ENCODE measurements at regions of chr3 and their contacts with region 1.

Region 1: DNA sequence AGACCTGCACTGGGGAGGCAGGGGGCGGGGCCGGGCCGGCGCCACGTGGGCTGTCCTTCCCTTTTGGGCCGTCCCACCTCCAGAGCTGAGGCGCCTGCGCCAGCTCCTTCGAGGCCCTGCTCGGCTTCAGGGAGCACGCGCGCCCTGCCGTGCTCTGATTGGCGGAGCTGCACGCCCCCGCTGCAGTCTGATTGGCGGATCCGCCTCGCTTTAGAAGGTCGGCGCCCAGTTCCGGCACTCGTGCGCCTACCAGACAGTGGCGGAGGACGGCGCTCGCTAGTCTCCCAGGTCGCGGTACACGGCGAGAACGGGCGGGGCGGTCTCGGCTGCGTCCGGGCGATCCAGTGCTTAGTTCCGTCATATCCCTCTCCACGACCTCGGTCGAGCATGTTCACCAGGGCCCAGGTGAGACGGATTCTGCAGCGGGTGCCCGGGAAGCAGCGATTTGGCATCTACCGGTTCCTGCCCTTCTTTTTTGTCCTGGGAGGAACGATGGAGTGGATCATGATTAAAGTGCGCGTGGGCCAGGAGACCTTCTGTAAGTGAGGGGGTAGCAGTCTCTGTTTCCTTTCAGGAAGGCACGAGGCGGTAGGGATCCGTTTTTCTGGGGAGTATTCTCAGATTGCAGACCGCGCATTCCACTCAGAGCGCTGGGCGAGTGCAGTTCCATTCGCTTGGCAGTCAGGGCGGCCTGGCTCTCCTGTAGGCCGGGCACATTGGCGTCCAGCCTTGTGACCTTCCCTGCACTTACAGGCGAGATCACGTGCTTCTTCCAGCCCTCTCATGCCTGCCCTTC is at the start of gene UQCC5:
- DNase-seq: peak; percentile 92
- ATAC-seq: peak; percentile 87
- H3K4me3 Mint-ChIP-seq: peak within 1 kb of the TSS; percentile 98
- H3K27ac Mint-ChIP-seq: peak within 1 kb of the TSS; percentile 96
- H3K4me1 Mint-ChIP-seq: peaks cover 42% of the 10 kb centered on the region
- H3K27me3 Mint-ChIP-seq: no peaks in the 10 kb centered on the region
- CTCF ChIP-seq: no peak
- total RNA-seq, gene UQCC5: 11.7 and 13.6 TPM in 2 replicates

Region 2: DNA sequence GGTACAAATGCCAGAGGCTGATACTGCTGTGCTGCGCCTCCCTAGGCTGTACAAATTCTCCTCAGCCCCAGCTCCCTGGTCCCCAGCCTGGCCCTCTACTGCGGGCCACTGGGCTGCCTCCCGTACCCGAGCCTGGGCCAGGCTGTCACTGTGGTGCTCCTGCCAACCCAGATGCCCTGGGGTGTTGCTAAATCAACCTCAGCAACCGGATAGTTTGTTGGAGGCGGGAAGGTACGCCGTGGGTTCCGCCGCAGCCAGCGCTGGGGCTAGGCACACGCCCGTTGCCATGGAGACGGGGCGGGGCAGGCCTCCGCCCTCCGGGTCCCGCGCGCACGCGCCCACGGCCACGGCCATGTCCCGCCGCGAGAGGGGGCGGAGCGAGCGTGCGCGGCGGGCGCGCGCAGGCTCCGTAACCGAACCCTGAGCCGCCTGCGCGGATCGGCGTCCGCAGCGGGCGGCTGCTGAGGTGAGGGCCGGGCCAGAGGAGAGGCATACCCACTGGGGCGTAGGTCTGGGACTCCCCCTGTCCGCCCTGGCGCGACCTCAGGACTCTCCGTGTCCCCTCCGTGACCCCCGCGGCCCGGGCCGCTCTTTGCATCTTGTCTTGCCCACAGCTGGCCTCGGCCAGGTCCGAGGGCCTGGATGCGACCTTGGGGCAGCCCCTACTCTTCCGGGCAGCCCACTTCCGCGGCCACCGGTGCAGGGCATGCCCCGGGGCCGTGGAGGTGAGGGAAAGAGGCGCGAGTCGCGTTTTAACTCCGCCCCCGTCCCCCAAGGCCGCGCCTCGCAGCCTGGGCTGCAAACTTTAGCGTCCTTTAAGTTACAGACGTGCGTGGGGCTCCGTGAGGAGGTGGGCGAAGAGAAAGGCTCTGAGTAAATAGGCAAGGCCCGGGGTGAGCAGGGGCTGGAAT is 865.5 kb before region 1 on chr3 and contains the start of gene TEX264:
- CTCF ChIA-PET with region 1: no interaction called
- POLR2A ChIA-PET with region 1: no interaction called
- intact Hi-C with region 1: loop called (anchors 5 kb)
- DNase-seq: peak; percentile 95
- ATAC-seq: peak; percentile 85
- H3K4me3 Mint-ChIP-seq: peak within 1 kb of the TSS; percentile 89
- H3K27ac Mint-ChIP-seq: peak within 1 kb of the TSS; percentile 89
- H3K4me1 Mint-ChIP-seq: peaks cover 55% of the 10 kb centered on the region
- H3K27me3 Mint-ChIP-seq: no peaks in the 10 kb centered on the region
- CTCF ChIP-seq: no peak
- total RNA-seq, gene TEX264: 24.1 and 24.4 TPM in 2 replicates

Region 3: DNA sequence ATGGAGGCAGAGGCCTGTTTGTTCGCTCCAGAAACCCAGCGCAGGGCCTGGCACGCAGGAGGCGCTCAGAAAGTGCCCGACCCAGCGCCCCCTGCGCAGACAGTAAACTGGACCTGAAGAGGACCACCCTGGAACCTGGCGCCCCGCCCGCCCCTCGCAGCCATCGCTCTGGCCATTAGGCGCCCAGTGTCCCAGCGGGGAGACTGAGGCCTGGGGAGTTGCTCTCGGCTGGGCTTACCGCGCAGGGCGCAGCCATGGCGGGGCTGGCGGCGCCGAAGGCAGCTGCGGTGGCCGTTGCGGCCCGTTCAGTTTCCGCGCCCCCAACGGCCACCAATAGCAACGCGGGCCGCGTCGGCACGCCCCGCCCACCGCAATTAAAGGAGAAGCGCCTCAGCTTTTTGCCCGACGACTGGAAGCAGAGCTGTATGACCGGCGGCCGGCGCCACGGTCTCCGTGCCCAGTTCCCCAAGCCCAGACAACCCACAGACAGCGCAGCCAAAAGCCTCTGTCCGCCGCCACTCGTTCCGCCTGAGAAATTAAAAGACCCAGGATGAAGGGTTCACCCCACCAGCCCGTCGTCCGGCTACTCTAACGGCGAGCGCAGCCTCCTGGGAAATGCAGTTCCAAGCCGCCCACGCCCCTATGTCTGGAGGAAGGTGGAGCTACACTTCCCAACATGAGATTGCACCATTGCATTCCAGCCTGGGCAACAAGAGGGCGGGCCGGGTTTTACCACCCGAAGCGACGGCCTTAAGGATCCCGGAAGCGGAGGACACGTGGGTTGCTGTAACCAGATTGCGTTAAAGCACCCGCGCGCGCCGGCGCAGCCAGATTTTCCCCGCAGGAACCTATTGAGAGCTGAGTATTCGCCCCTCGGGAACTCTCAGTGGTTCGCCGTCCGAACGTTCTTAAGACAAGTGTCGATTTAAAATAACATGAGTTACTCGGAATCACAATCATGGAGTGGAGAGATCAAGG is 382.2 kb before region 1 on chr3 and contains the start of gene POC1A:
- CTCF ChIA-PET with region 1: no interaction called
- POLR2A ChIA-PET with region 1: no interaction called
- intact Hi-C with region 1: loop called (anchors 10 kb)
- DNase-seq: peak; percentile 84
- ATAC-seq: peak; percentile 87
- H3K4me3 Mint-ChIP-seq: peak within 1 kb of the TSS; percentile 96
- H3K27ac Mint-ChIP-seq: peak within 1 kb of the TSS; percentile 97
- H3K4me1 Mint-ChIP-seq: peaks cover 13% of the 10 kb centered on the region
- H3K27me3 Mint-ChIP-seq: no peaks in the 10 kb centered on the region
- CTCF ChIP-seq: no peak
- total RNA-seq, gene POC1A: 2.3 and 2.4 TPM in 2 replicates

Region 4: DNA sequence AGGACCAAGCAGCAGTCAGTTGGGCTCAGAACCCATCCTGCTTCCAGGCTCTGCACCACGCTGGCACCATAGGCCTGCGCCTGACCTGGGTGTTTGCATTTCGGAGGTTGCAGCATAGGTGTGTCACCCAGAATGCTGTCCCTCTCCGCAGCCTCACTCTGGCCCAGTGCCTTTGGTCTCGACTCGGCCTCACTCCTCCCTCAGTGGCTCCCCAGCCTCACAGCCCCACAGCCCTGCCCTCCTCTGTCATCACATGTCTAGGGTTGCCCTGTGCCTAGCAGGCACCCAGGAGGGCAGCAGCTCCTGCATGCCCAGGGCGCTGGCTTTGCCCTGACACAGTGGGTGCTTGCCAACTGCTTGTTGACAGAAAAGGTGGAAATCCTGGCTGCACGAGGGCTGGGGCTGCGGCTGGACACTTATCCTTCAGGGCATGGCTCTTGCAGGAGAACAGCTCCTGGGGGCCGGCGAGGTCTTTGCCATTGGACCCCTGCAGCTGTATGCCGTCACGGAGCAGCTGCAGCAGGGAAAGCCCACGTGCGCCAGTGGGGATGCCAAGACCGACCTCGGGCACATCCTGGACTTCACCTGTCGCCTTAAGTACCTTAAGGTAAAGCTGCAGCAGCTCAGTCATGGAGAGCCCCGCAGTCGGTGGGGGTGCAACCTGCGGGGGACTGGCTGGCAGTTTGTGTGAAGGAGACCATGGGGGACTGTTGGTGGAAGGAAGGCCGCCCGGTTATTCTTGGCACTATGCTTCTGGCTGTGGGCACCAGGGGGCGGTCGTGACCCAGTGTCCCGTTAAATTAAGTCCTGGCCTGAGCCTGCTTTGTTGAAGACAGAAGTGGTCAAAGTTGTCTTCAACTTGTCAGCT is 65.0 kb before region 1 on chr3:
- CTCF ChIA-PET with region 1: no interaction called
- POLR2A ChIA-PET with region 1: no interaction called
- intact Hi-C with region 1: loop called (anchors 2 kb)
- DNase-seq: peak; percentile 35
- ATAC-seq: peak; percentile 57
- H3K4me3 Mint-ChIP-seq: no peak overlapping the region
- H3K27ac Mint-ChIP-seq: no peak overlapping the region
- H3K4me1 Mint-ChIP-seq: no peaks in the 10 kb centered on the region
- H3K27me3 Mint-ChIP-seq: no peaks in the 10 kb centered on the region
- CTCF ChIP-seq: no peak

Region 5: DNA sequence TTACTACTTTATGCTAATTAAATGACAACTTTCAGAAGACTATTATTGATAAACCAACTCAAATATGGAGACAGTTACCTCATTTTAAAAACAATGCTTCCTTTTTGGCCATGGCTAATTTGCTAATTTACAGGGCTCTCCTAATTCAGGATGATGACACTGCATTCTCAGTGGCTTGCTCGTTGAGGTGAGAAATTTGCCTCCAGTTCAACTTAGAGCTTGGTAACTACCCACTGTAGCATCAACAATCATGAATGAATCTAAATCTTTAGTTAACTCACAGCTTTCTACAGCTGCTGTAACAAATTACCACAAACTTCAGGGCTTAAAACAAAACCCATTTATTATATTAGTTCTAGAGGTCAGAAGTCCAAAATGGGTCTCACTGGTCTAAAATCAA is 135.1 kb after region 1 on chr3:
- CTCF ChIA-PET with region 1: no interaction called
- POLR2A ChIA-PET with region 1: no interaction called
- intact Hi-C with region 1: no loop called
- DNase-seq: no peak
- ATAC-seq: no peak
- H3K4me3 Mint-ChIP-seq: no peak overlapping the region
- H3K27ac Mint-ChIP-seq: no peak overlapping the region
- H3K4me1 Mint-ChIP-seq: peaks cover 17% of the 10 kb centered on the region
- H3K27me3 Mint-ChIP-seq: no peaks in the 10 kb centered on the region
- CTCF ChIP-seq: no peak

Region 6: GRCh38 chr3:52685709-52686691 is 149.4 kb after region 1 on chr3 and contains the starts of genes GNL3 and PBRM1:
- CTCF ChIA-PET with region 1: no interaction called
- POLR2A ChIA-PET with region 1: interaction called, 5 read pairs
- intact Hi-C with region 1: loop called (anchors 1 kb)
- DNase-seq: peak; percentile 92
- ATAC-seq: peak; percentile 89
- H3K4me3 Mint-ChIP-seq: peak within 1 kb of the TSS; percentile 96
- H3K27ac Mint-ChIP-seq: peak within 1 kb of the TSS; percentile 95
- H3K4me1 Mint-ChIP-seq: peaks cover 53% of the 10 kb centered on the region
- H3K27me3 Mint-ChIP-seq: no peaks in the 10 kb centered on the region
- CTCF ChIP-seq: no peak
- total RNA-seq, gene GNL3: 137 and 145 TPM in 2 replicates
- total RNA-seq, gene PBRM1: 60.0 and 62.1 TPM in 2 replicates

Region 7: GRCh38 chr3:53160660-53161449 is 624.3 kb after region 1 on chr3 and contains the start of gene PRKCD:
- CTCF ChIA-PET with region 1: no interaction called
- POLR2A ChIA-PET with region 1: no interaction called
- intact Hi-C with region 1: loop called (anchors 10 kb)
- DNase-seq: peak; percentile 77
- ATAC-seq: peak; percentile 66
- H3K4me3 Mint-ChIP-seq: peak within 1 kb of the TSS; percentile 87
- H3K27ac Mint-ChIP-seq: peak within 1 kb of the TSS; percentile 89
- H3K4me1 Mint-ChIP-seq: peaks cover 58% of the 10 kb centered on the region
- H3K27me3 Mint-ChIP-seq: peaks cover 2% of the 10 kb centered on the region
- CTCF ChIP-seq: no peak
- total RNA-seq, gene PRKCD: 60.4 and 63.9 TPM in 2 replicates

Measured in activated B cell treated with CpG ODN at 0.5 μM for 24 hours (primary cell).